ENCODE measurements at regions of chr6 and their contacts with region 1.

Region 1: GRCh38 chr6:83514866-83515466 is 2.6 kb downstream of the PRSS35 start:
- DNase-seq: peak; percentile 48
- H3K4me3 ChIP-seq: no peak overlapping the region
- H3K27ac ChIP-seq: no peak overlapping the region
- H3K4me1 ChIP-seq: peaks cover 4% of the 10 kb centered on the region
- H3K27me3 ChIP-seq: no peaks in the 10 kb centered on the region
- CTCF ChIP-seq: peak; percentile 73 to 81

Region 2: DNA sequence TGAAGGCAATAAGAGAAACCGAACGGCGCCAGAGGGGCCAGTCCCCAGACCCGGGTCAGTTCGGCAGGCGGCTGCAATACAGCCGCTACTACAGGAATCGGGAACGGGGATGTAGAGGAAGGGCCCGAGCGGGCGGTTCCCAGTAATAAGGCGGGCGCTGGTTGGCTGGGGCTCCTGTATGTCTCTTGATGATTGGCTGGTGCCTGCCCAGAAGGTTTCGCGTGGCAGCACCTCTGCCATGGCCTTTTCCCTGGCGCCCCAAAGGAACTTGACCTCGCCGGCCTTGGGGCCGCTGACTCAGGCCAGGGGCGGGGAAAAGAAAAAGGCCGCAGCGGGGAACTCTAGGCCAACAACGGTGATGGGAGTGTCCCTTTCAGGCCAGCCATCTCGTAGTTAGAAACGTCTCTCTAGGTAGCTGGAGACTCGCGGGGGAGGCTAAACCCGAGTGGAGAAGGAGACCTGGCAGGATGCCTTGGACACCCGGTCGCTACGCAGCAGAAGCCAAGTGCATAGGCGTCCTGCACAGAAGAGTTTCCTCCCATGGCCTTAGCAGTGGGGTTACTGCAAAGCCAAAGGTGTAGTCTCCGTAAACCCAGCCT is 1267.2 kb before region 1 on chr6 and contains the start of gene IBTK:
- CTCF ChIA-PET with region 1: no interaction called
- dilution Hi-C with region 1: no loop called
- in situ Hi-C with region 1: no loop called
- intact Hi-C with region 1: loop called (anchors 10 kb)
- DNase-seq: peak; percentile 88
- H3K4me3 ChIP-seq: peak within 1 kb of the TSS; percentile 69 to 89 (median 87)
- H3K27ac ChIP-seq: peak within 1 kb of the TSS; percentile 86
- H3K4me1 ChIP-seq: peaks cover 18% of the 10 kb centered on the region
- H3K27me3 ChIP-seq: no peaks in the 10 kb centered on the region
- CTCF ChIP-seq: no peak
- total RNA-seq, gene IBTK: 39.1 to 49.2 TPM

Region 3: DNA sequence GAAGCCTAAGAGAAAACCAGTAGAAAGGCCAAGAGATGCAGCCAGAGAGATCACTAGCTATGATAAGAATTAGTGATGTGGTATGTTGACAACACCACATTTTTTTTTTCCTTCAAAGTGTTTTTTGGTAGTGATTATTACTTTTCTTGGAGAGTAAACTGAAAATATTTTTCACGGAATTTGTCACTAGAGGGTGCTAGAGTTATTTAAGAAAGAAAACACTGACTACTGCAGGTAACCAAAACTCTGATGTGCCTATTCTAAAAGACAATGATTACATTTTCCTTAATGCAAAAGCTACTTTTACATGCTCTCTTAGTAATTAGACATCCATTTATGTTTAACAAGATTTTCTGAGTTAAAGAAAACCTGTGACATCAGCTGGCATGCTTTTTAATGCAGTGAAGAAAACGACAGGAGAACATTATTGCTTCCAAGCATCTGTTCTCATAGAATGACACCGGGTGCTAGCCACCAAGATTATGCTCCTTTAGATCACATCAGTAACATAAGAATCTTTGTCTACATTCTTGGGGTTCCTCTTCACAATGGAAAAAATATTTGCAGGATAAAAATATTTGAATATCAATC is 293.0 kb before region 1 on chr6:
- CTCF ChIA-PET with region 1: interaction called, 3 read pairs
- dilution Hi-C with region 1: loop called (anchors 5 kb)
- in situ Hi-C with region 1: loop called (anchors 5 kb)
- intact Hi-C with region 1: loop called (anchors 1 kb)
- DNase-seq: peak; percentile 25
- H3K4me3 ChIP-seq: no peak overlapping the region
- H3K27ac ChIP-seq: no peak overlapping the region
- H3K4me1 ChIP-seq: no peaks in the 10 kb centered on the region
- H3K27me3 ChIP-seq: no peaks in the 10 kb centered on the region
- CTCF ChIP-seq: peak; percentile 33 to 54

Region 4: DNA sequence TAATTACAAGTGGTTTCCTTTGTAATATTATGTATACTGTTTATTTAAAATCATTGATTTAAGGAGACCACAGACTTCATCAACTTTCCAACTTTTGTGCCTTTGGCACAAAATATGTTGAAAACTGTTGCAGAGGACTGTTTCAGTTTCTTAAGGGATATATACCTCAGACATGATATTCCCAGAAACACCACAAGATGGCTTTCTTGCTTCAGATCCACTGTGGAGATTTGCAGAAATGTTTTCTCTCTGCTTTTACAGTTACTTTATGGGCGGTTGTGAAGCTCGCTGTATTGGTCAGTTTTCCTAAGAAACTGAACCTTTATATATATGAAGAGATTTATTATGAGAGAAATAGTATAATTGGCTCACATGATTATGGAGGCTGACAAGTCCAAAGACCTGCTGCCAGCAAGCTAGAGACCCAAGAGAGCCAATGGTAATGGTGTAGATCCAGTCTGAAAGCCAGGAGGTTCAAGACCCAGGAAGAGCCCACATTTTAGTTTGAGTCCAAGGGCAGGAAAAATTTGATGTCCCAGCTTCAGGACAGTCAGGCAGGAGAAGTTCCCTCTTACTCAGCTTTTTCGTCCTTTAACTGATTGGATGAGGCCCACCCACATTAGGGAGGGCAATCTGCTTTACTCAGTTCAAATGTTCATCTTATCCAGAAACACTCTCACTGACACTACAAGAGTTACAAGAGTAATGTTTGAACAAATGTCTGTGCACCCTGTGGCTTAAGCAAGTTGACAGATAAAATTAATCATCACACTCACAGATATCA is 96.9 kb before region 1 on chr6:
- CTCF ChIA-PET with region 1: no interaction called
- dilution Hi-C with region 1: no loop called
- in situ Hi-C with region 1: loop called (anchors 5 kb)
- intact Hi-C with region 1: loop called (anchors 1 kb)
- DNase-seq: peak; percentile 38
- H3K4me3 ChIP-seq: no peak overlapping the region
- H3K27ac ChIP-seq: no peak overlapping the region
- H3K4me1 ChIP-seq: no peaks in the 10 kb centered on the region
- H3K27me3 ChIP-seq: no peaks in the 10 kb centered on the region
- CTCF ChIP-seq: peak; percentile 51 to 76

Region 5: DNA sequence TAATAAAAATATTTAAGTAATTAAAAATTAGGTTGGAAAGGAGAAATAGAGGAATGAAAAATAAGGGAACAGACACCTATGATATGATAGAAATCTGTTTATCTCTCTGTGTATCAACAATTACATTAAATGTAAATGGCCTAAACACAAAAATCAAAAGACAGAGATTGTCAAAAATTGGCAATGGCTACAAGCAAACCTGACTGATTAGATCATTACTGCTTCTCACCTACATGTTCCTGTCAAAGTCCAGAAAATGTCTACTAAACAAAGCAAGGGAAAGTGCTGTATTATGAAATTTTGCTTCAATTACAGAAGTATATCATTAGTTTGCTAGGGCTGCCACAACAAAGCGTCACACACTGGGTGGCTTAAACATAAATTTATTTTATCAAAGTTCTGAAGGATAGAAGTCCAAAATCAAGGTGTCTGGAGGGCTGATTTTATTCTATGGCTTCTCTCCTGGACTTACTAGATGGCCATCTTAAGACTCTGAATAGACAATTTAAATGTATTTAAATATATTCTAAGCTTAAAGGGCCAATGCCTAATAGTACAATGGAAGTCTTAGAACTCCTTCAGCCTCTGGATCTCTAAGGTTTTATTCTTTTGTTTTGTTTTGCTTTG is 90.5 kb before region 1 on chr6:
- CTCF ChIA-PET with region 1: no interaction called
- dilution Hi-C with region 1: no loop called
- in situ Hi-C with region 1: loop called (anchors 5 kb)
- intact Hi-C with region 1: no loop called
- DNase-seq: no peak
- H3K4me3 ChIP-seq: no peak overlapping the region
- H3K27ac ChIP-seq: no peak overlapping the region
- H3K4me1 ChIP-seq: no peaks in the 10 kb centered on the region
- H3K27me3 ChIP-seq: no peaks in the 10 kb centered on the region
- CTCF ChIP-seq: no peak

Region 6: DNA sequence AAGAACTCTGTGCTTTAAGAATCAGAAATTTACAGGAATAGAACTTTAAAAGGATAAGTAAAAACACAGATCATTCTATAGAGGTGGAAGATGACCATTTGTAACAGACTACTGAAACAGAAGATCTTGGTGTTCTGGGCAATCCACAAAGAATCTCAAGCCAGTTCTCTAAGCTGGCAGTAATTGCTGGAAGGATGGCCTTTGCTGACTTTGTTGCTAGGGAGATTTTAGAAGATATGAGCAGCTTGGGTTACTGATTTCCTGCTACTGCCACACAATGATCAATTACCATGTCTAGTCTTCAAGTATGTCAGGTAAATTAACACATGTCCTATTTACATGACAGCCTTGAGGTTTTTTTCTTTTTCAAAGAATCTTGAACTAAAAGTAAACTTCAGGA is 162.8 kb after region 1 on chr6:
- CTCF ChIA-PET with region 1: no interaction called
- dilution Hi-C with region 1: no loop called
- in situ Hi-C with region 1: no loop called
- intact Hi-C with region 1: no loop called
- DNase-seq: no peak
- H3K4me3 ChIP-seq: no peak overlapping the region
- H3K27ac ChIP-seq: no peak overlapping the region
- H3K4me1 ChIP-seq: no peaks in the 10 kb centered on the region
- H3K27me3 ChIP-seq: peaks cover 2% of the 10 kb centered on the region
- CTCF ChIP-seq: no peak

Region 7: GRCh38 chr6:83729871-83730270 is 214.9 kb after region 1 on chr6:
- CTCF ChIA-PET with region 1: no interaction called
- dilution Hi-C with region 1: no loop called
- in situ Hi-C with region 1: no loop called
- intact Hi-C with region 1: no loop called
- DNase-seq: no peak
- H3K4me3 ChIP-seq: no peak overlapping the region
- H3K27ac ChIP-seq: no peak overlapping the region
- H3K4me1 ChIP-seq: no peaks in the 10 kb centered on the region
- H3K27me3 ChIP-seq: no peaks in the 10 kb centered on the region
- CTCF ChIP-seq: no peak

Measured in mammary epithelial cell (primary cell).